ENCODE measurements at regions of chr11 and their contacts with region 1.

Region 1: GRCh38 chr11:313787-314547 is at the start of gene IFITM1:
- DNase-seq: peak; percentile 78
- ATAC-seq: peak; percentile 40
- H3K4me3 Mint-ChIP-seq: peak within 1 kb of the TSS; percentile 95
- H3K27ac Mint-ChIP-seq: peak within 1 kb of the TSS; percentile 99
- H3K4me1 Mint-ChIP-seq: peaks cover 29% of the 10 kb centered on the region
- H3K27me3 Mint-ChIP-seq: no peaks in the 10 kb centered on the region
- total RNA-seq, gene IFITM1: 248 to 285 TPM

Region 2: GRCh38 chr11:196786-197719 is 116.9 kb before region 1 on chr11:
- CTCF ChIA-PET with region 1: no interaction called
- POLR2A ChIA-PET with region 1: no interaction called
- intact Hi-C with region 1: no loop called
- DNase-seq: peak; percentile 4
- ATAC-seq: no peak
- H3K4me3 Mint-ChIP-seq: no peak overlapping the region
- H3K27ac Mint-ChIP-seq: no peak overlapping the region
- H3K4me1 Mint-ChIP-seq: peaks cover 16% of the 10 kb centered on the region
- H3K27me3 Mint-ChIP-seq: no peaks in the 10 kb centered on the region

Region 3: GRCh38 chr11:207208-207862 is 106.6 kb before region 1 on chr11 and contains the starts of genes BET1L and RIC8A:
- CTCF ChIA-PET with region 1: interaction called, 8 read pairs
- POLR2A ChIA-PET with region 1: interaction called, 3 read pairs
- intact Hi-C with region 1: loop called (anchors 1 to 5 kb)
- DNase-seq: peak; percentile 99
- ATAC-seq: peak; percentile 89
- H3K4me3 Mint-ChIP-seq: peak within 1 kb of the TSS; percentile 94
- H3K27ac Mint-ChIP-seq: peak within 1 kb of the TSS; percentile 99
- H3K4me1 Mint-ChIP-seq: peaks cover 56% of the 10 kb centered on the region
- H3K27me3 Mint-ChIP-seq: no peaks in the 10 kb centered on the region
- total RNA-seq, gene BET1L: 45.5 to 49.4 TPM
- total RNA-seq, gene RIC8A: 104 to 124 TPM

Region 4: DNA sequence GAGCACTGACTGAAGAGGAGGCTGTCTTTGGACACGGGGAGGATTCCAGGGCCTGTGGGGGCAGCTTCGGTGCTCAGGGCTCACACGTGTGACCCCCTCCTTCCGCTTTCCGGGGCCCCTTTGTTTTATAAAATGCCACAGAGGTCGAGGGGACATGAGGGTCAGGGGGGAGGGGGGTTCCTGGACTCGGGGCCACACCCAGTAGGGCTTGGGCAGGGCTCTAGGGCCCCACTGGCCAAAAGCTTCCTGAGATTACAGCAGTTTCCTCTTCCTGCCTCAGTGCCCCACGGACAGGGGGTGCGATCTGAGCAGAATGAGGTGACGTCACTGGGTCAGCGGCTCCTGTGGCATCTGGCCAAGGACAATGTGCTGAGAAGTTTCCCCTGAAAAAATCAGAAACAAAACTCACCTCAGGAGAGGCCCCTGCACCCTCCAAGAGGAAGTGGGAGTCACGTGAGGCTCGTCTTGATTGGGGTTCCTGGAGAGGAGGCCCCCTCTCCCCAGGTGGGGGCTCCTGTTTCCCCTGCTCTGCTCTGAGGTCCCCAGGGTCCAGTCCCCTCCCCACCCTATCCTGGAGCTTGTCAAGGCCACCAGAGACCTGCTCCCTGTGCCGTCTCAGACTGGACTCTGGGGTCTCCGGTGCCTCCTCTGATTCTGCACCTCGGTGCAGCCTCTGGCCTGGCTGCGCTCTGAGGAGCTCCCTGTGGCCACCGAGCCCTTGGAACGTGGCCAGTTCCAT is 13.0 kb after region 1 on chr11:
- CTCF ChIA-PET with region 1: interaction called, 7 read pairs
- POLR2A ChIA-PET with region 1: interaction called, 3 read pairs
- intact Hi-C with region 1: loop called in 1 of 2 experiments (anchors 2 kb)
- DNase-seq: peak; percentile 86
- ATAC-seq: peak; percentile 59
- H3K4me3 Mint-ChIP-seq: peak overlapping the region; percentile 36
- H3K27ac Mint-ChIP-seq: peak overlapping the region; percentile 93
- H3K4me1 Mint-ChIP-seq: peaks cover 66% of the 10 kb centered on the region
- H3K27me3 Mint-ChIP-seq: no peaks in the 10 kb centered on the region

Region 5: DNA sequence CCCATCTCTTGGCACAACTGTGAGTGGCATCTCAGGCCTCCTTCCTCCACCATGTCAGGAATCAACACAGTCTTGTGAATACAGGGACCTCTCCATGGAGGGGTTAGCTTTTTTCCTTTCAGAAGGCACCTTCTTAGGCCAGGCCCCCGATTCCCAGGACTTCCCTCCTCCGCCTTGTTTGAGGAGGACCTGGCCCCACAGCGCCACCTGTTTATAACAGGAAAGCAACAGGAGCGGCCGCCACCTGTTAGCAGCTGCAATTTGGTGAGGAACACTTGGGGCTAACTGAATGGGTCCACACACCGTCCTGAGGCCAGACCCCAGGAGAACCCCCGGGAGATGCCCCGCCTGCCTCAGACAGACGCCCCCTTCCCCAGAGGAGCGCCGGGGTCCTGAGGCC is 76.2 kb after region 1 on chr11:
- CTCF ChIA-PET with region 1: no interaction called
- POLR2A ChIA-PET with region 1: no interaction called
- intact Hi-C with region 1: no loop called
- DNase-seq: no peak
- ATAC-seq: no peak
- H3K4me3 Mint-ChIP-seq: no peak overlapping the region
- H3K27ac Mint-ChIP-seq: no peak overlapping the region
- H3K4me1 Mint-ChIP-seq: no peaks in the 10 kb centered on the region
- H3K27me3 Mint-ChIP-seq: no peaks in the 10 kb centered on the region

Region 6: GRCh38 chr11:1238767-1239595 is 925.0 kb after region 1 on chr11:
- CTCF ChIA-PET with region 1: no interaction called
- POLR2A ChIA-PET with region 1: no interaction called
- intact Hi-C with region 1: no loop called
- DNase-seq: peak; percentile 30
- ATAC-seq: no peak
- H3K4me3 Mint-ChIP-seq: no peak overlapping the region
- H3K27ac Mint-ChIP-seq: no peak overlapping the region
- H3K4me1 Mint-ChIP-seq: no peaks in the 10 kb centered on the region
- H3K27me3 Mint-ChIP-seq: no peaks in the 10 kb centered on the region

Region 7: GRCh38 chr11:1796413-1797011 is 1482.5 kb after region 1 on chr11:
- CTCF ChIA-PET with region 1: no interaction called
- POLR2A ChIA-PET with region 1: no interaction called
- intact Hi-C with region 1: no loop called
- DNase-seq: no peak
- ATAC-seq: no peak
- H3K4me3 Mint-ChIP-seq: no peak overlapping the region
- H3K27ac Mint-ChIP-seq: no peak overlapping the region
- H3K4me1 Mint-ChIP-seq: peaks cover 4% of the 10 kb centered on the region
- H3K27me3 Mint-ChIP-seq: peaks cover 9% of the 10 kb centered on the region

Measured in activated CD4-positive, alpha-beta T cell treated with anti-CD3 and anti-CD28 coated beads for 36 hours (primary cell).